Mammary epithelial cell (primary cell): ENCODE measurements at regions of chr9 and their contacts with region 1.

Region 1: DNA sequence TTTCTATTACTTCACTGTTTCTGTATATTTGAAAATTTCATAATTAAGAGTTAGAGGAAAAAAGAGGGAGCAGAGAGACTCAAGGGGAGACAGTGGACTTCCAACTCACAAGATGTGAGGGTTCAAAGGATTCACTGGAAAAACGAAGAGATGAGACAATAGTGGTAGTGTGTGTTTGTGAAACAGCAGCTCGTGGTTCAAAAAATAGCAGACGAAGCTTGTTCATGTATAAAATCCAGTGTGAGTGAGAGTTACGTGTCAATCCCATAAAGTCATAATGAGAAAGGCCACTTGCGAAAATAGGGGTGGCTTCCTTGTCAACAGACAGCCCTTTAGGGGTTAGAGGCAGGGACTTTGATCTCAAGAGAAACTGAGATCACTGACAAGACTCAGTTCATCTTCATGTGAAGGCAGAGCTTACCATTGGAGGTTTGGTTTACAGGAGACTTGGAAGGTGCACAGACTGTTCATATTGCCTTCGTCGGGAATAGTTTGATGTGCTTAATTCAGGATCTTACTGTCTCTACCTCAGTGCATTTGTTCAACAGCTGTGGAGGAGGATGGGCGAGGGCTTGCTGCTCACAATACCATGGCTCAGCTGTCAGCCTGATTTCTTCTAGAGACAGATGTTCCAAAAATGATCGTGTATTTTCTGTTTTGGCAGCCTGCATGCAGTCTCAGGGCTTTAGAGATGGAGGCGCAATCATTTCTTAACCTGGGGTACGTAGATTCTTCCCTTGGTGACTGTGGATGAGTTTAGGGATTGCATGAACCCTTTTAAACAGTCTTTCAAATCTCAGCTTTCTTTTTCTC is 105.7 kb upstream of the KLF9 start:
- DNase-seq: no peak
- H3K4me3 ChIP-seq: no peak overlapping the region
- H3K27ac ChIP-seq: no peak overlapping the region
- H3K4me1 ChIP-seq: no peaks in the 10 kb centered on the region
- H3K27me3 ChIP-seq: peaks cover 1% of the 10 kb centered on the region
- CTCF ChIP-seq: no peak

Region 2: GRCh38 chr9:70374962-70375618 is 145.0 kb before region 1 on chr9:
- CTCF ChIA-PET with region 1: no interaction called
- dilution Hi-C with region 1: no loop called
- in situ Hi-C with region 1: no loop called
- intact Hi-C with region 1: no loop called
- DNase-seq: no peak
- H3K4me3 ChIP-seq: no peak overlapping the region
- H3K27ac ChIP-seq: no peak overlapping the region
- H3K4me1 ChIP-seq: no peaks in the 10 kb centered on the region
- H3K27me3 ChIP-seq: no peaks in the 10 kb centered on the region
- CTCF ChIP-seq: no peak

Region 3: DNA sequence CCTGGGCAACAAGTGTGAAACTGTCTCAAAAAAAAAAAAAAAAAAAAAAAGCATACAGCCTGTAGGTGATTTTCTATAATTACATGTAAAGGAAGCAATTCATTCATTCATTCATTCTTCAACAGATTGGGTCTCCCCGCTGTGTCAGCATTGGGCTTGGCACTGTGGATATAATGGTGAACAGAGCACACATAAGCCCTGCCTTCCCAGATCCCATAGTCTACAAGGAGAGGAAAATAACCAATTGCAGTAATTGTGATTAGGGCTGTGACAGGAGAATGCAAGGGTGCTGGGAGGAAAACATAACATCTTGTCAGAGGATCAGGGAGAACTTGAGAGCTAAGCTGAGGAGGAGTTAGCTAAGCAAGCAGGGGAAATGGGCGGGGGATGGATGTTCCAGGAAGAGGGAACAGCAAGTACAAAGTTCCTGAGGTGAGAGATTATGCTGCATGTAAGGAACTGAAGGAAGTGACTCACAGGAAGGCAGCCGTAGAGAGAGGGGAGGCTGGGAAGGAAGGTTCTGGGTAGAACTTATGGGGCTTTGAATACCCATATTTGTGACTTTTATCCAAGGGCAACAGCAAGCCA is 81.7 kb before region 1 on chr9:
- CTCF ChIA-PET with region 1: no interaction called
- dilution Hi-C with region 1: loop called (anchors 5 kb)
- in situ Hi-C with region 1: no loop called
- intact Hi-C with region 1: no loop called
- DNase-seq: peak; percentile 63
- H3K4me3 ChIP-seq: no peak overlapping the region
- H3K27ac ChIP-seq: peak overlapping the region; percentile 27
- H3K4me1 ChIP-seq: peaks cover 13% of the 10 kb centered on the region
- H3K27me3 ChIP-seq: no peaks in the 10 kb centered on the region
- CTCF ChIP-seq: no peak

Region 4: DNA sequence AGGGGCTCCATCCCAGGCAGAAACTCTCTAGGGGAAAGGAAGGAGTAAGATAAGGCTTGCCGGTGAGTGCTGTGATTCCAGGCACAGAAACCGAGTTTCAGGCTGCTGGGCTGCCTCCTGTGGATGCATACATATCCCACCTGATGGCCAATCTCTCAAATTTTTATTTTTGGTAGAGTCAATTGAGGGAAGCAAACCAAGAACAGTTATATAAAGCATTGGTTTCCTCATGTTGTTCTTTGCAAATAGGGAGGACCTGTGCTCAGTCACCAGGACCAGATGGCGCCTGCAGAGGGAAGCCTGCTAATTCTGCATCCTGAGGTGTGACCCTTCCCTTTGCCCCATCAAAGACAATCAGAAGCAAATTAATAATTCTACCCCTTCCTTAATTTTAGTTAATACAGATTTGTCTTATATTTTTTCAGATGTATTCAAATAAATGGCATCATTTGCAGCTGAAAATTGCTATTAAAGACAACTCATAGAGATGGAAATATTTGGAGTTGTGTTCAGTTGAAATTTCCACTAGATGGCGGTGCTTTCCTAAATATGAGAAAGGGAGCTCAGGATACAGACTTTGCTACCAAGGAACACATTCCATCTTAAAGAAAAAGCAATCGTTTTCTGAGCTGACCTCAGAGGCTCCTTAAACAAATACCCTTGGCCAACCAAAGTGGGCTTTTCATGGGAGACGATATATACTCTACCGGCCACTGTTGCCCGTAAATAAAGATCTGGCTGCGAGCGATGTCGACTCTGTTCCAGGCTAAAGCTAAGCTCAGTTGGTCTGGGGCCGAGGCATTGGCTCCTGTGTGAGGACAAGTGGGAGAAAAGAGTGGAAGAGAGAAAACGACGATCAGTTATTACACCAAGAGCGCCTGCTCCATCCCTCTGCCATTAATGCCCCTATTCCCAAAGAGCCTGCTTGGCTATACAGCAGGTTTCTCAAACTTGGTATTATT is 120.0 kb after region 1 on chr9:
- CTCF ChIA-PET with region 1: no interaction called
- dilution Hi-C with region 1: no loop called
- in situ Hi-C with region 1: no loop called
- intact Hi-C with region 1: no loop called
- DNase-seq: peak; percentile 32
- H3K4me3 ChIP-seq: no peak overlapping the region
- H3K27ac ChIP-seq: no peak overlapping the region
- H3K4me1 ChIP-seq: no peaks in the 10 kb centered on the region
- H3K27me3 ChIP-seq: no peaks in the 10 kb centered on the region
- CTCF ChIP-seq: peak; percentile 50 to 68